ENCODE measurements at regions of chr1 and their contacts with region 1.

Region 1: DNA sequence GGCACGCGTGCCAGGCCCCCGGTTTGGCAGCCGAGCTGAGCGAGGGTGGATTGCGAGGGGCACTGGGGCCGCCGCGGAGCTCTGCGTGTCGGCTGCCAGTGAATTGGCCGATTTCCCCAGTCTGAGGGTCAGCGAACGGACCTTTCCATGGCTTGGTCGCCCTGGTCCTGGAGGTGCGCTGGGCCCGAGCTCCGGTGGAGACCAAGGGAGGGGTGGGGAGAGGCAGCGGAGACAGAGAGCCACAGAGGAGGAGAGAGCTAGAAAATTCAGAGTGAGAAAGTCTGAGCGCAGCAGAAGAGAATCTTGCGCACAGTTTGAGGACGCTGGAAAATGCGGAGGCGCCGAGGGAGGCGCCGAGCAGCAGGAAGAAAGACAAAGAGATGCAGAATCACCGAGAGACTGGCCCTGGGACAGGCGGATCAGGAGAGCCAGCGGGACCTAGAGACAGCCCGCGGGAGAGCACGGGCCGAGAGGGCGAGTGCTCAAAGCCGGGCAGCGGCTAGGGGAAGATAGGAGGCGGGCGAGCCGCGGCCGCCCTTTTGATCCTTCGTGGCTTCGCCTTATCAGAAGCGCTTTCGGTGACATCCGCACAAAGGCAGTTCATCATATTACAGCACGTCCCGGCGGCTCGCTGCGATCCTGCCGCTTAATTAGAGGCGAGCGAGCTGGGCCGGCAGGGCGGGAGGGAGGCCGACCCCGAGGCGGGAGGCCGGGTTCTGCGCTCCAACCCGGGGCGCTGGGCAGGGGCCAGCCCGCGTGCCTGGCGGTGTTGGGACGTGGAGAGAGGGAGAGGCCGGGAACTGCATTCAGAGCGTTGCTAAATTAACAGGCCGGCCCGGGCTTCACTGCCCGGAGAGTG is 12.7 kb downstream of the PAX7 start:
- DNase-seq: peak; percentile 26
- ATAC-seq: peak; percentile 55
- H3K4me3 ChIP-seq: peak overlapping the region; percentile 58
- H3K27ac ChIP-seq: no peak overlapping the region
- H3K4me1 ChIP-seq: no peaks in the 10 kb centered on the region
- H3K27me3 ChIP-seq: peaks cover 97% of the 10 kb centered on the region
- CTCF ChIP-seq: no peak

Region 2: DNA sequence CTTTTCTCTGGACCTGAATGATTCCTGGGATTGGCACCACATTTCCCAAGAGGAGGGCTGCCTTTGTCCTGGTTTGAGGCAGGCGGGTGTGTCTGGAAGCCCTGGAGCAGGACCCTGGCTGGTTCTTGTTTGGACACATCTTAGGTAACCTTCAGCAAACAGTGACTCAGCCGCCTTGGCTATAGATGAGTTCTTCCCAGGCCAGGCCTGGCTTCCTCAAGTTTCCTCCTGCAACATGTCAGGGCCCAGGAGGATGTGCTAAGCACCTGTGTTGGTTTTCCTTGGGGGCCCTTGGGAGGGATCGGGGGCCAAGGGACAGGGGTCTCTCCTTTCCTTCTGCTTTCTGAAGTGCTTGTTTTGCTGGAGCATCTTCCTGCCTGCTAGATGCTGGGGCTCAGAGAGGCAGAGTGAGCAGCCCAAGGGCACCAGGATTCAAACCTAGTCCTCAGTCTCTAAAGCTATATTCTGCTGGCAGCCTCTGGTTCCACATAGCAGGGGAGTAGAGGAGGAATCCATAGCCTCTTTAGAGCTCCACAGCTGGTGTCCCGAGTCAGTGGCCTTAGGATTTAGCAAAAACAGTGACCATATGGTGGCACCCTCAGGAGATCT is 25.5 kb after region 1 on chr1:
- CTCF ChIA-PET with region 1: no interaction called
- POLR2A ChIA-PET with region 1: interaction called, 4 read pairs
- intact Hi-C with region 1: loop called (anchors 1 kb)
- DNase-seq: peak; percentile 95
- ATAC-seq: peak; percentile 88
- H3K4me3 ChIP-seq: peak overlapping the region; percentile 52; the same call in 1 of the 2 replicates
- H3K27ac ChIP-seq: peak overlapping the region; percentile 99
- H3K4me1 ChIP-seq: peaks cover 69% of the 10 kb centered on the region
- H3K27me3 ChIP-seq: no peaks in the 10 kb centered on the region
- CTCF ChIP-seq: no peak

Measured in PC-3 (cell line).